Panc1 (cell line): ENCODE measurements at regions of chr16 and their contacts with region 1.

Region 1: DNA sequence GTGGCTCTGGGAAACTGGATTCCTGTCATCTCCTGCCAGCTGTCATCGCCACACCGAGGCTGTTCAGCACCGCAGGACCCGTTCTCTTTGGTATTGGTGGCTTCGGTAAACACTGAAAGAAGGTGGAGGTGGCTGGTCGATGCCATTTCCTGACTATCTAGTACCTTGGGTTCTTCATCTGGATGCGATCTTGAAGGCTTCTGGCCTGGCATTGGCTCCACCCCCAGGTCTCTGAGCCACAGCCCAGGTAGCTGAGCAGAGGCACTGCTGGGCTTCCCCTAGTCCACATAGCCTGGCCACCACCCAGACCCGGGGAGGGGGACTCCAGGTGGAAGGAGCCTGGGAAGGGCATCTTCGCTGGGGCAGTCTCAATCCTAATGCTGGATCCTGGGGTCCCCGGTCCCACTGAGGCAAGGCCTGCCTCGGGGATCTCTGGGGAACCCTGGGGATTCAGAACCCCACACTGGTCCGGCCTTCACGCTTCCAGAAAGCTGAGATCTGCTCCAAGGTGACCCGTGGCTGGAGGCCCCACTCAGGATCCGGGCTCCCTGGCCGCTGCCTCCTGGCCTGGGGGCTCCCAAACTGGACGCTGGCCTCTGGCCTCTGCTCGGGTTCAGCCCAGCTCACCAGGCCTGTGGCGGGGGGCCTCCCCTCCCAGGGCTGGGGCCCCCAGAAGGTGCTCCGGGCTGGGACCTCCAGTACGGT is 1.8 kb downstream of the C16orf54 start:
- DNase-seq: no peak
- ATAC-seq: no peak
- H3K4me3 ChIP-seq: no peak overlapping the region
- H3K27ac ChIP-seq: no peak overlapping the region
- H3K4me1 ChIP-seq: no peaks in the 10 kb centered on the region
- H3K27me3 ChIP-seq: no peaks in the 10 kb centered on the region
- CTCF ChIP-seq: no peak

Region 2: GRCh38 chr16:29729116-29729521 is 14.9 kb before region 1 on chr16:
- CTCF ChIA-PET with region 1: interaction called, 10 read pairs
- POLR2A ChIA-PET with region 1: no interaction called
- in situ Hi-C with region 1: no loop called
- intact Hi-C with region 1: no loop called
- DNase-seq: peak; percentile 41
- ATAC-seq: peak; percentile 91
- H3K4me3 ChIP-seq: peak overlapping the region in 1 of 2 experiments; percentile 24; a peak in 1 of 4 replicates
- H3K27ac ChIP-seq: no peak overlapping the region
- H3K4me1 ChIP-seq: no peaks in the 10 kb centered on the region
- H3K27me3 ChIP-seq: no peaks in the 10 kb centered on the region
- CTCF ChIP-seq: peak; percentile 85